Right ventricle myocardium inferior (tissue), 1 donor: ENCODE measurements at regions of chr9 and their contacts with region 1.

Region 1: GRCh38 chr9:34500623-34501267 is 22.0 kb downstream of the ENHO start:
- DNase-seq: no peak
- ATAC-seq: peak; percentile 51

Region 2: GRCh38 chr9:34403554-34404380 is 97.0 kb before region 1 on chr9:
- intact Hi-C with region 1: loop called (anchors 2 kb)
- DNase-seq: no peak
- ATAC-seq: peak; percentile 52

Region 3: GRCh38 chr9:34437006-34437925 is 63.5 kb before region 1 on chr9:
- intact Hi-C with region 1: loop called (anchors 1 kb)
- DNase-seq: no peak
- ATAC-seq: peak; percentile 73

Region 4: DNA sequence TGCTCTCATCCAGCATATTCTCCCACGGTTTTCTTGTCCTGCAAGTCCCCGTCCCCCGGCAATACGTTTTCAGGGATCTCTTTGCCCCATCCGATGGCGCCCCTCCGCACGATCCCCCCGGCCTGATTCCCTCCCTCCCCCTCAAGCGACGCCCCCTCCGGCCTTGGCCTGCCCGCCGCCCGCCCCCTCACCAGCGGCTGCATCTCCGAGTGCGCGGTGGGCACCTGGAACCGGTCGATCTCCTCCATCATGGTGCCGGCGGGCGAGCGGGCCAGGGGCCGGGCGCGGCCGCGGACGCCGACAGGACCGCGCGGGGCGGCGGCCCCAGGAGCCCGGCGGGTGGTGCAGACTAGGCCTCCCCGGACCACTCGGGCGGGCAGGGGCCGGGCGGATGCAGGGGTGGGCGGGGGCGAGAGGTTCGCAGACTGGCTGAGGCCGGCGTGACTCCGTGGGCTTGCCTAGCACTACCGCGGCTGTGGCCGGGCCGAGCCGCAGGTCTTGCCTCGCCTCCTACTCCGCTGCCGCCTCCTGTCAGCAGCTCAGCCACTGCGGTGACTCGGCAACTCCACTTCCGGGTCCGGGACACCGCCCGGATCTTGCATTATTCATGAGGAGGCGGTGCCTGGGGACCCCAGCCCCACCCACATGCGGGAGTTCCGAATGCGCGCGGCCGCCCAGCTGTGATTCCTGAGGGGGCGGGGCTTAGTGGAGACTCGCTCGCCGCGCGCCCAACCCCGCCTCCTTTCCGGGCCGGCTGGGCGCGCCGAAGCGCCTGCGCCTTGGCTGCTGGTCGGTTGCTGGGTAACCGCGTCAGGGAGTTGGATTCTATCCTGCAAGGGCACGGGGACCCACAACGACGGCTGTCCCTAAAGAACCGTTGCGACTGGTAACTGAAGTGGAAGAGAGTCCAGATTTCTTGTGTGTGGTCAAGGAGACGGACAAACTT is 42.5 kb before region 1 on chr9 and contains the starts of genes DNAI1 and FAM219A:
- intact Hi-C with region 1: loop called (anchors 1 kb)
- DNase-seq: peak; percentile 99
- ATAC-seq: peak; percentile 98
- total RNA-seq, gene DNAI1: not detected
- total RNA-seq, gene FAM219A: 27.2 TPM

Region 5: DNA sequence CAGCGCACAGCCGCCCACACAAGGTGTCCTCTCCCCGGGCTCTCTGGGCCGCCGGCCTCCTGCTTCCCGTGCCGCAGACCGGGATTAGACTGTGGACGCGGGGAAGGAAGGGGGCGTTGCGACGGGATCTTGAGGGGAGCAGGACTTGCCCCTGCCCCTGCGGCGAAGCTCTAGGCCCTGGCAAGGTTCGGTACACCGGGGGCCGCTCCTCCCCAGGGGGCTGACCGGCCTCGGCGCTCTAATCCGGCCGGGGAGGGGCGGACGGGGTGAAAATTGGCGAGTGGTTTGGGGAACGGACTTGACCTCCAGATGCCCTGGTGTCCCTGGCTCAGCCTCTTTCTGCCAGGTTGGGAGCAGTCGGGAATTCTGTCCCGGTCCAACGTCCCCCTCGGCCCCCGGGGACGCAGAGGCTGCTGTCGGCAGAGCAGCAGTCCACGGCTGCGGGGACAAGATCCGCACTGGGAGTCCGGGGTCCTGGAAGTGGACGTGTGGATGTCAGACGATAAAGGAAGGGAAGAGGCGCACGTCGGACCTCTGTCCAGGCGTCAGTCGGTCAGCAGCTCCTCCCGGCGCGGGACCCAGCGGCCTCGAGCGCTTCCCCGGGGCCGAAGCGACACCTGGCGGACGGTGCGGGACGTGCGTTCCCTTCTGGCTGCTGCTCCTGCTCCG is 90.6 kb after region 1 on chr9:
- intact Hi-C with region 1: loop called (anchors 5 kb)
- DNase-seq: peak; percentile 93
- ATAC-seq: peak; percentile 74